MCF 10A (cell line): ENCODE measurements at regions of chr20 and their contacts with region 1.

Region 1: DNA sequence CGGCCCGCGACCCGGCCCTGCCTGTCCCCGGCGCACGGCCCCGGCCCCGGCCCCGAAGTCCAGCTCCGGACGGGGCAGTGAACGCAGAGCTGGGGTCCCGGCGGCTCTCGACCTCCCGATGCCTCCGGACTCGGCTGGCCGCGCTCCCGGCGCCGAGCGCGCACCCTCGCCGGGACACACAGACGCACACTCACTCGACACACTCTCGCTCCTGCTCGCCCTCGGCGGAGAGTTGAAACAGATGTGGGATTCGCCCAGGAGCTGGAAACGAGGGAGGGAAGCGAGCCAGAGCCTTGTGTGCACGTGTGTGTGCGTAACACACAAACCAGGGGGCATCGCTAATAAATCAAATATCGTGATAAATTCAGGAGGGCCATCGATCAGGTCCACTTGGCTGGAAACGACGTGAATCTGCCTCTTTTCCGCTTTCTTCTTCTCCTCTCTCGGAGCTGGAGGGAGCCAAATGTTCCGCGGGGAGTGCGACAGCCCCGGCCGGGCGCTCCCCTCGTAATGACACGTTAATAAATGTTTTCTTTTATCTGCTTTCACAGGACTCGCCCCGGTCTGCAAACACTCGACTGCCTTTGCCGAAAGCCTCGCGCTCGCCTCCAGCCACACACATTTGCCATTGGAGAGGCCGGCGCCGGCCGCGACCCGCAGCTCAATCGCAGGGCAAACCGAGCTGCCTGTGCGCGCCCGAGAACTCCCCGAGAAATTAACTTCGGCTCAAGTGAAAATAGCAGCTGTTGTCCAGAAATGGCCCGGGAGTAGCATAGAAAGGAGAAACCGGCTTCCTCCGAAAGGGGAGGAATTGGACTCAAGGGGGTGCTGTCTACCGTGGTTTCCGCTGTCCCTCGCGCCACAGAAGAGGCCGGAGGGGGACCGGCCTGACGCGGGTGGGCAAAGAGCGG is 828 bp upstream of the SULF2 start:
- DNase-seq: peak; percentile 83
- H3K4me3 Mint-ChIP-seq: peak overlapping the region; percentile 72
- H3K27ac Mint-ChIP-seq: peak overlapping the region; percentile 55
- H3K4me1 Mint-ChIP-seq: peaks cover 52% of the 10 kb centered on the region
- H3K27me3 Mint-ChIP-seq: no peaks in the 10 kb centered on the region
- CTCF ChIP-seq: peak; percentile 92

Region 2: DNA sequence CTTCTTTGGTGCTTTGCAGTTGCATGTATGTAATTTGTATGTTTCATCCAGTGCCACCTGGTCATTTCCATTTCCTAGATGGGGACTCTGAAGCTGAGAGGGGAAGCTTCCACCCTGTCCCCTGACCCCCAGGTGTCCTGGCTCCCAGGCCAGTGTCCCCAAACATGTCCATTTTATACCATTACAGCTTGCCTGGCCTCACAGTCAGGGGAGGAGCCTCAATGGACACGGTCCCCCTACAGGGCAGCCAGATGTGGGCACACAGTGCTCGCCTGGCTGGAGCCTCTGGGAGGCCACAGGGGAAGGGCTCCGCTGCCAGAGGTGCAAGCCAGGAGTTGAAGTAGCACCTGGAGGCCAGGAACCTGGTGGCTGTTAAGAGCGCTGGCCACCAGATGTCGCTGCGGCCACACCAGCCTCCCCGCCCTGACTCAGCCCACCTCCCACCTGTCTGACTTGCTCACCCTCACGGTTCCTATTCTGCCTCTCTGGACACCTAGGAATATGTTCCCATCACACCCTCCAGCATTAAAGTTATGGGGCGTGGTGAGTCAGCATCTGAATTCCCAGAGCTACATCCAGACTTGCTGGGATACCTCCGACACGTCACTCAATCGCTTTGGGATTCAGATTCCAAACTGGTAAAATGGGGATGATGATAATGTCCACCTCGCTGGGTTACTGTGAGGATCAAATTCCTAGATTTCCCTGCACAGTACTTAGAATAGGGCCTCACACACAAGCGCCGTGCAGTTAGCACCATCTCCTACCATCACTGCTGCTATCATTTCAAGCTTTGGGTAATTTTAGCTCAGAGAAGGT is 108.3 kb before region 1 on chr20:
- CTCF ChIA-PET with region 1: interaction called, 13 read pairs
- POLR2A ChIA-PET with region 1: no interaction called
- intact Hi-C with region 1: loop called (anchors 5 kb)
- DNase-seq: peak; percentile 60
- H3K4me3 Mint-ChIP-seq: no peak overlapping the region
- H3K27ac Mint-ChIP-seq: no peak overlapping the region
- H3K4me1 Mint-ChIP-seq: no peaks in the 10 kb centered on the region
- H3K27me3 Mint-ChIP-seq: no peaks in the 10 kb centered on the region
- CTCF ChIP-seq: peak; percentile 95

Region 3: DNA sequence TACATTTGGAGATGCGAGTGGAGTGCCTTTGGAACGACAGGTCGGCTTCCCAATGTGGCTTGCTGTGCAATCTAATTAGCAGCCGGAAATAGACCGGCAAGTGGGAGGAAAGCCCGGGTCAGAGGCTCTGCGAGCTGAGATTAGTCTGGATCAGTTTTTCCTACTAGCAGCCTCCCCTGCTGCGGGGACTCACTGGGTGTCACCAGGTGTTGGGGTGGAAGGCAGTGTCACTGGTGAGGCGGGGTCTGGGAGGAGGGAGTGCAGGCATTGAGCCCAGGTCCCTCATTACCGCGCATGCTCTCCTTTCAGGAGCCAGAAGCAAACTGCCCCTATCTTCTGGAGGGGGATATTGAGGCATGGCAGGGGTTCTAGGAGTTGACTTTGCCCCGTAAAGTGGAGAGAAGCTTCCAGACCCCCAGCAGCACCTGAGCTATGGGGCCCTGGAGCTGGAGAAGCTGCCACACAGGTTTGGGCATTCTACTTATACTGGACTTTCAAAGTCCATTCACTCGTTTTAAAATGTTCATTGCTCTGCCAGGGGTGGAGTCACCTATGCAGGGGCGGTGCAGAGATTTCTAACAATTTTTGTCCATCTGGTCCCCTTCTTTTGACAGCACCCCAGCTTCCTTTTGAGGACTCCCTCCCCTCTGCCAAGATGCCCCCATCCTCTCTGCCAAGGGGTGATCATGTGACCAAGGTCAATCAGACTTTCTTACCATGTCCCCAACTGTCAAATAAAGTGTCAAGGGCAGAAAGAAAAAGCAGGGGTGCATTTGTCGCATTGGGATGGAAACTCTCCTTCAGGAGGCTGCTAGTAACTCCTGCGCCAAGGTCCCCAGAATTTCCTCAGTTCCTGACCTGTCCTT is 11.7 kb before region 1 on chr20:
- CTCF ChIA-PET with region 1: interaction called, 38 read pairs
- POLR2A ChIA-PET with region 1: interaction called, 8 read pairs
- intact Hi-C with region 1: no loop called
- DNase-seq: no peak
- H3K4me3 Mint-ChIP-seq: no peak overlapping the region
- H3K27ac Mint-ChIP-seq: no peak overlapping the region
- H3K4me1 Mint-ChIP-seq: peaks cover 21% of the 10 kb centered on the region
- H3K27me3 Mint-ChIP-seq: no peaks in the 10 kb centered on the region
- CTCF ChIP-seq: no peak

Region 4: GRCh38 chr20:47854163-47854562 is 68.1 kb after region 1 on chr20:
- CTCF ChIA-PET with region 1: interaction called, 5 read pairs
- POLR2A ChIA-PET with region 1: interaction called, 4 read pairs
- intact Hi-C with region 1: loop called (anchors 2 kb)
- DNase-seq: no peak
- H3K4me3 Mint-ChIP-seq: no peak overlapping the region
- H3K27ac Mint-ChIP-seq: no peak overlapping the region
- H3K4me1 Mint-ChIP-seq: peaks cover 6% of the 10 kb centered on the region
- H3K27me3 Mint-ChIP-seq: no peaks in the 10 kb centered on the region
- CTCF ChIP-seq: no peak

Region 5: DNA sequence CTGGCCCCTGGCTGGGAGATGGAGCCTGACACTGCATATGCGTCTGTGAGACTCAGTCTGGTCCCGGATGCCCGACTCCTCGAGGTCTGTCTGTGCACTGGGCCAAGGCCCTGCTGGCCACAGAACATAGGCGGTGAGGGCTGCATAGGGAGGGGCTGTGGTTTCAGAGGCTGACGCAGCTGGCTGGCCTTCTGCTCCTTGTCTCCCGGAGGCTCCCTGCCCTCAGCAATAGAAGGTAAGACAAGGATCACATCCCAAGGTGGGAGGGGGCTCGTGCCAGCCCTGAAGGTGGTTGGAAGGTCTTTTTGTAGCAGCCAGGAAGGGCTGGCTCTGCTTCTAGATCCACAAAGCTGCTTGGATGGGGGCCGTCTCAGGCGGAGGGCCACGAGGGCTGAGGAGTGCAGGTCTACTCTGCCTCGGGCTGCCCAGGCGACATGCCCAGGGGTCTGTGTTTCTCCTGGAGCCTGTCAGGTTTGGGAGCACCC is 239.0 kb after region 1 on chr20:
- CTCF ChIA-PET with region 1: interaction called, 8 read pairs
- POLR2A ChIA-PET with region 1: interaction called, 8 read pairs
- intact Hi-C with region 1: loop called (anchors 2 kb)
- DNase-seq: peak; percentile 84
- H3K4me3 Mint-ChIP-seq: peak overlapping the region; percentile 78
- H3K27ac Mint-ChIP-seq: peak overlapping the region; percentile 96
- H3K4me1 Mint-ChIP-seq: peaks cover 29% of the 10 kb centered on the region
- H3K27me3 Mint-ChIP-seq: no peaks in the 10 kb centered on the region
- CTCF ChIP-seq: no peak

Region 6: DNA sequence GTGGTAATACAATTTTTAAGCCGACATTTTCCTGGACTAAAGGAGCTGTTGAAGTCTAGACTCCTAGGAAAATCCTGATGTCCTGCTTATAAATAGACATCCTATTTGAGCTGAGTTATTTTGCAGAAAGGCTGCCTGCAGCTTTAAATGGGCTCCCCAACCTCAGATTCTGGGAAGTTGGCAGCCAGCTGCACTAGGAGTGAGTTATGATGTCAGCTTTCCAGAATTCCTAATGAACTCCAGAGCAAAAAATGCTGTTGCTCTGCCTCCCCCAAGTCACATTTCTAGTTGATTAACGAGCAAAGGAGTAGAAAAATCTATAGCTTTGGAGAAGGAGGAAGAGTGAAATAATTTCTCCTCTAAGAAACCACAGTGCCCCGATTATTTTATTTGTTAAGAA is 345.5 kb after region 1 on chr20:
- CTCF ChIA-PET with region 1: interaction called, 5 read pairs
- POLR2A ChIA-PET with region 1: interaction called, 13 read pairs
- intact Hi-C with region 1: no loop called
- DNase-seq: no peak
- H3K4me3 Mint-ChIP-seq: no peak overlapping the region
- H3K27ac Mint-ChIP-seq: no peak overlapping the region
- H3K4me1 Mint-ChIP-seq: peaks cover 28% of the 10 kb centered on the region
- H3K27me3 Mint-ChIP-seq: peaks cover 3% of the 10 kb centered on the region
- CTCF ChIP-seq: no peak

Region 7: DNA sequence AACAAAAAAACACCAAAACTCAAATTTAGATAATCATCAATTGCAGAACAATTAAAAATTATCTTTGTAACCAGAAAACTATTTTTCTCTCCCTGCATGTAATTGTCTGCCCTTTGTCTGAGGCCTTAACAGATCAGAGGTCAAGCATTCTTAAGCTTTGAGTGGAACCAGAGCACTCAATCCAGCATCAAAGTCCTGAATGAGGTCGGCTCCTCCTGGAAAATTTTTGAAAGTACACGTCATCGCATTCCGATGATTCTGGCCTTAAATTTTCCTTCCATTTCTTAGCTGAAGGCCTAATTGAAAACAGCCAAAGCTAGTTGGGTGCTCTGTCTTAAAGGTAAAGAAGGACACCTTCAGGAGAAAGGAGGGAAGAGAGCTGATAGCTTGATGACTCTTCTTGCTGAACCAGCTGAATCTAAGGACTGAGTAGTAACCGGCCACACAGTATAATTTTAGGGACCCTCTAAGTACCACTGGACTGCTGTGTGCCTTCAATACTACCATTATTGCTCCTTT is 509.4 kb after region 1 on chr20:
- CTCF ChIA-PET with region 1: interaction called, 68 read pairs
- POLR2A ChIA-PET with region 1: interaction called, 41 read pairs
- intact Hi-C with region 1: loop called (anchors 1 kb)
- DNase-seq: peak; percentile 81
- H3K4me3 Mint-ChIP-seq: no peak overlapping the region
- H3K27ac Mint-ChIP-seq: peak overlapping the region; percentile 39
- H3K4me1 Mint-ChIP-seq: peaks cover 41% of the 10 kb centered on the region
- H3K27me3 Mint-ChIP-seq: peaks cover 8% of the 10 kb centered on the region
- CTCF ChIP-seq: peak; percentile 57